CD8-positive, alpha-beta T cell (primary cell): ENCODE measurements at regions of chr20 and their contacts with region 1.

Region 1: DNA sequence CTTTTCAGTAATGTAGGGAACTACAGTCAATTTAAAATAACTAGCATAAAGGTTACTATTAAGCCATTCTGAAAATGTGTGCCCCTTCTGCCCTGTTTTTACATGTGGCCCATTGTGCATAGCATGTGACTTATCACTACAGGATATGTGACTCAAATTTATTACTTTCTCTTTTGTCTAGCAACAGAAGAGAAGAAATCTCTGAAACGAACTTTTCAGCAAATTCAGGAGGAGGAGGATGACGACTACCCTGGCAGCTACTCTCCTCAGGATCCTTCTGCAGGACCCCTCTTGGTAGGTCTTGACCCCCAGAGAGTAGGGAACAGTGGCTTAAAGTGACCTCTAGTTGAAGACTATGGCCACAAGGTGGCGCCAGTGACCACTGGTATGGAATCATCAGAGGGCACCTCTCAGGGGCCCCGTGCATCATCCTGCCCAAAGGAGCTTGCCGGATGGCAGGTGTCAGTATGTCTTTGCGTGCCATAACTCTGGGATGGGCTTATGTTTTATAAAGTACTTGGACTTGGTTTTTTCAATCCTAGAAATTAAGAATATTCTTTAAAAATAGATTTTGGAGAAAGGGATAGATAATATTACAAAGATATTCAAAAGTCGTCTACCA is 23.9 kb downstream of the RPRD1B start:
- DNase-seq: peak; percentile 53 to 84 (median 81)
- ATAC-seq: peak; percentile 92
- H3K4me3 ChIP-seq: no peak overlapping the region
- H3K4me3 Mint-ChIP-seq: no peak overlapping the region
- H3K27ac ChIP-seq: no peak overlapping the region
- H3K27ac Mint-ChIP-seq: peak overlapping the region; percentile 68
- H3K4me1 ChIP-seq: peaks cover 6% of the 10 kb centered on the region
- H3K4me1 Mint-ChIP-seq: peaks cover 27% of the 10 kb centered on the region
- H3K27me3 ChIP-seq: no peaks in the 10 kb centered on the region
- H3K27me3 Mint-ChIP-seq: no peaks in the 10 kb centered on the region
- CTCF ChIP-seq: peak; percentile 89

Region 2: GRCh38 chr20:37845241-37845711 is 212.2 kb before region 1 on chr20:
- CTCF ChIA-PET with region 1: no interaction called
- POLR2A ChIA-PET with region 1: no interaction called
- intact Hi-C with region 1: no loop called
- DNase-seq: no peak
- ATAC-seq: no peak
- H3K4me3 ChIP-seq: no peak overlapping the region
- H3K4me3 Mint-ChIP-seq: no peak overlapping the region
- H3K27ac ChIP-seq: no peak overlapping the region
- H3K27ac Mint-ChIP-seq: no peak overlapping the region
- H3K4me1 ChIP-seq: no peaks in the 10 kb centered on the region
- H3K4me1 Mint-ChIP-seq: no peaks in the 10 kb centered on the region
- H3K27me3 ChIP-seq: no peaks in the 10 kb centered on the region
- H3K27me3 Mint-ChIP-seq: no peaks in the 10 kb centered on the region
- CTCF ChIP-seq: no peak

Region 3: DNA sequence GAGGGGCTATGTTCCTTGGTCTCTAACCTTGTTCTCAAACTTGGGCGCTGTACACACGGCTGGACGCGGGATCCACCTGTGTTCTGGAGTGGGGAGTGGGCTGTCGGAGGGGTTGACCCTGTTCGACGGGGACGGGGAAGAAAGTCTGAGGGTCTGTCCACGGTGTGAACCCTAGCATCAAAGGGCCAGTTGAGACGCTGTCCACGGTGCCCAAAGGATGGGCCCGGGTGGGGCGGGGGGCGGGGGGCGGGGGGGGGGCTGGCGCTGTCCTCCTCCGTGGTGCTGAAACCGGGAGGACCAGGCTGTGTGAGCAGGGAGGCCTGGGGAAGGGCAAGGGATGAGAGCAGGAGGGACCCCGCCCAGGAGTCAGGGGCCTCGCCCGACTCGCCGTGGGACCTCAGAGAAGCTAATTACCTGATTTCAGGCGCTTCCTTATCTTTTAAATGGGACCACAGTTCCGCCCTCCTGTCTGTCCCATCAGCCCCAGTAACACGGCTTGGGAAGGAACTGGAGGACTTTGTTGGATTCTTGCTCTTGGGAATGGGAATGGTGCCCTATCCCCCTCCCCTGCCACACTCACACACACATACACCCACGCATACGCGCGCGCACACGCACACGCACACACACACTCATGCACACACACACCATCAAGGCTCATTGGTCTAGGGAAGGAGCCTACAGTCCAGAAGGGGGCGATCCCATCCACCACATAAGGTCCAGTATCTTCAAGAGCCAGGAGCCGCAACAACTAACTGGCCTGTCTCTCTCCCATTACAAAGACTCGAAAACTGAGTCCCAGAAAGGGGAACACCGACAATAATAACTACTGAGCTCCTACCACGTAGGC is 155.6 kb before region 1 on chr20:
- CTCF ChIA-PET with region 1: no interaction called
- POLR2A ChIA-PET with region 1: no interaction called
- intact Hi-C with region 1: no loop called
- DNase-seq: peak in 2 of 9 experiments; percentile 29 to 45
- ATAC-seq: peak; percentile 40
- H3K4me3 ChIP-seq: no peak overlapping the region
- H3K4me3 Mint-ChIP-seq: peak overlapping the region; percentile 42
- H3K27ac ChIP-seq: no peak overlapping the region
- H3K27ac Mint-ChIP-seq: peak overlapping the region; percentile 52
- H3K4me1 ChIP-seq: no peaks in the 10 kb centered on the region
- H3K4me1 Mint-ChIP-seq: peaks cover 13% of the 10 kb centered on the region
- H3K27me3 ChIP-seq: peaks cover 8 to 14% of the 10 kb centered on the region in 2 experiments
- H3K27me3 Mint-ChIP-seq: peaks cover 54% of the 10 kb centered on the region
- CTCF ChIP-seq: no peak

Region 4: DNA sequence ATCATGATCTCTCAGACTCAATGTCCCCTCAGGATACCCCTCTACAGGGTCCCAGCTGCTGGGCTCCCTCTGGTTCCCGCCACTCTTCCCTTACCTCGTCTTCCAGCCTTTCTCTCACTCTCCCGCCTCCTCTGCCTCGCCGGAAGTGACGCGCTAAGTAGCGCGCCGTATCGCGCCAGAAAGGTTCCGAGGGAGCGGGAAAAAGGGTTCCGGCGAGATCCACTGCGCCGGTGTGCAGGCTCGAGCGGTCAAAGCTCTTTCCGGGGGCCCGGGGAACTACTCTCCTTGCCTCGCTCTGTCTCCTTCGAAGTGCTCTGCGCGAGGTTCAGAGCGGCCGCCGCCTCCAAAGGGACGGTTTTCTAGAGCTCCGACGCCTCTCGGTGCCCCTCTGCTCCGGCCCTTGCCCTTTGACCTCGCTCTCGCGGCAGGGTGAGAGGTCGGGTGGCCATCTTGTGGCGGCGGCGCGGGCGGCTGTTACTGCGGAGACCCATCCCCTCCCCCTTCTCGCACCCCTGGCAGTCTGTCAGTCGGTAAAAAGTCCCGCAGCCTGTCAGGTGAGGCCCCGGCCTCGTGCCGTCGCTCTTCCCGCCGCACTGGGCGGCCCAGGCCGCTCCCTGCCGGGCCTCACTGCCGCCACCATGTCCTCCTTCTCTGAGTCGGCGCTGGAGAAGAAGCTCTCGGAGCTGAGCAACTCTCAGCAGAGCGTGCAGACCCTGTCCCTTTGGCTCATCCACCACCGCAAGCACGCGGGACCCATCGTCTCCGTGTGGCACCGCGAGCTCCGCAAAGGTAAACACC is 24.0 kb before region 1 on chr20 and contains the starts of genes RPRD1B and TTI1:
- CTCF ChIA-PET with region 1: interaction called, 8 read pairs
- POLR2A ChIA-PET with region 1: interaction called, 3 read pairs
- intact Hi-C with region 1: loop called in 1 of 2 experiments (anchors 1 kb)
- DNase-seq: peak; percentile 77 to 95 (median 88)
- ATAC-seq: peak; percentile 86
- H3K4me3 ChIP-seq: peak within 1 kb of the TSS; percentile 84 to 94
- H3K4me3 Mint-ChIP-seq: peak within 1 kb of the TSS; percentile 98
- H3K27ac ChIP-seq: peak within 1 kb of the TSS; percentile 92 to 98
- H3K27ac Mint-ChIP-seq: peak within 1 kb of the TSS; percentile 98
- H3K4me1 ChIP-seq: peaks cover 51% of the 10 kb centered on the region
- H3K4me1 Mint-ChIP-seq: peaks cover 73% of the 10 kb centered on the region
- H3K27me3 ChIP-seq: no peaks in the 10 kb centered on the region
- H3K27me3 Mint-ChIP-seq: no peaks in the 10 kb centered on the region
- CTCF ChIP-seq: no peak
- total RNA-seq, gene RPRD1B: 73.3 to 79.4 TPM
- total RNA-seq, gene TTI1: 12.6 to 15.7 TPM

Region 5: DNA sequence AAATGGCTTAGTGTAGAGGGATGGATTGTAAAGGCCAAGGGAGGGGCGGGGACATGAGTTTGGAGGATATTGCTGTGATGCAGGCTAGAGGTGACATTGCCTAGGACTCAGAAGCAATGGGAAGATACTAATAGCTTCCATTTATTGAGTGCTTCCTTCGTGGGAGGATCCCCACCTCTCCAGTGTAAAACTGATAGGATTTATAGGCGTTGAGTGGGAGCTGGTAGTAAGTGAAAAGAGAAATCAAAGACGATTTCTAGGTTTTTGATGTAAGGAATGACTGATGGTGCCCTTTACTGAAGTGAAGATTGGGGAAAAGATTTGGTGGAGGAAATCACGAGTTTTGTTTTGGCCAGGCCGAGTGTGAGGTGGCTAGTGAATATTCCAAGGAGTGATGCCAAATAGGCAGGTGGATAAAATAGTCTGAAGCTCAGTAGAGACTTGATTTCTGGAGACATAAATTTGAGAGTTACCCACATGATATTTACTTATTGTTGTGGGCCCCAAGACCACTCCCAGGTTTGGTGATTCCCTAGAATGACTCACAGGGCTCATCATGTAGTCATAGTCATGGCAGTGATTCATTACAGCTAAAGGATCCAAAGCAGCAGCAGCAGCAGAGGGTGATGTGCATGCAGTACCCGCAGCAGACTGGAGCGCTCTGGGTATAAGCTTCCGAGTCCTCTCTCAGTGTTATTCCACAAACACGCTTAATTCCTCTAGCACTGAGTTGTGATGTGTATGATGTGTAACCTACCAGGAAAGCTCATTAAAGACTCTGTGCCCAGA is 13.8 kb before region 1 on chr20:
- CTCF ChIA-PET with region 1: interaction called, 10 read pairs
- POLR2A ChIA-PET with region 1: interaction called, 3 read pairs
- intact Hi-C with region 1: loop called in 1 of 2 experiments (anchors 1 kb)
- DNase-seq: no peak
- ATAC-seq: no peak
- H3K4me3 ChIP-seq: no peak overlapping the region
- H3K4me3 Mint-ChIP-seq: no peak overlapping the region
- H3K27ac ChIP-seq: no peak overlapping the region
- H3K27ac Mint-ChIP-seq: no peak overlapping the region
- H3K4me1 ChIP-seq: no peaks in the 10 kb centered on the region
- H3K4me1 Mint-ChIP-seq: peaks cover 44% of the 10 kb centered on the region
- H3K27me3 ChIP-seq: no peaks in the 10 kb centered on the region
- H3K27me3 Mint-ChIP-seq: no peaks in the 10 kb centered on the region
- CTCF ChIP-seq: no peak

Region 6: GRCh38 chr20:38073307-38074071 is 16.0 kb after region 1 on chr20:
- CTCF ChIA-PET with region 1: interaction called, 19 read pairs
- POLR2A ChIA-PET with region 1: no interaction called
- intact Hi-C with region 1: no loop called
- DNase-seq: peak in 3 of 9 experiments; percentile 11 to 59 (median 48)
- ATAC-seq: peak; percentile 51
- H3K4me3 ChIP-seq: no peak overlapping the region
- H3K4me3 Mint-ChIP-seq: no peak overlapping the region
- H3K27ac ChIP-seq: no peak overlapping the region
- H3K27ac Mint-ChIP-seq: peak overlapping the region; percentile 42
- H3K4me1 ChIP-seq: no peaks in the 10 kb centered on the region
- H3K4me1 Mint-ChIP-seq: peaks cover 25% of the 10 kb centered on the region
- H3K27me3 ChIP-seq: no peaks in the 10 kb centered on the region
- H3K27me3 Mint-ChIP-seq: no peaks in the 10 kb centered on the region
- CTCF ChIP-seq: peak; percentile 63

Region 7: GRCh38 chr20:38165089-38165989 is 107.9 kb after region 1 on chr20 and contains the start of gene TGM2:
- CTCF ChIA-PET with region 1: interaction called, 7 read pairs
- POLR2A ChIA-PET with region 1: no interaction called
- intact Hi-C with region 1: loop called in 1 of 2 experiments (anchors 1 kb)
- DNase-seq: peak in 7 of 9 experiments; percentile 6 to 61 (median 33)
- ATAC-seq: peak; percentile 67
- H3K4me3 ChIP-seq: no peak within 1 kb of the TSS
- H3K4me3 Mint-ChIP-seq: no peak within 1 kb of the TSS
- H3K27ac ChIP-seq: no peak within 1 kb of the TSS
- H3K27ac Mint-ChIP-seq: no peak within 1 kb of the TSS
- H3K4me1 ChIP-seq: no peaks in the 10 kb centered on the region
- H3K4me1 Mint-ChIP-seq: peaks cover 3% of the 10 kb centered on the region
- H3K27me3 ChIP-seq: peaks cover 6% of the 10 kb centered on the region in 2 experiments
- H3K27me3 Mint-ChIP-seq: peaks cover 34% of the 10 kb centered on the region
- CTCF ChIP-seq: peak; percentile 18
- total RNA-seq, gene TGM2: not detected

Region 8: DNA sequence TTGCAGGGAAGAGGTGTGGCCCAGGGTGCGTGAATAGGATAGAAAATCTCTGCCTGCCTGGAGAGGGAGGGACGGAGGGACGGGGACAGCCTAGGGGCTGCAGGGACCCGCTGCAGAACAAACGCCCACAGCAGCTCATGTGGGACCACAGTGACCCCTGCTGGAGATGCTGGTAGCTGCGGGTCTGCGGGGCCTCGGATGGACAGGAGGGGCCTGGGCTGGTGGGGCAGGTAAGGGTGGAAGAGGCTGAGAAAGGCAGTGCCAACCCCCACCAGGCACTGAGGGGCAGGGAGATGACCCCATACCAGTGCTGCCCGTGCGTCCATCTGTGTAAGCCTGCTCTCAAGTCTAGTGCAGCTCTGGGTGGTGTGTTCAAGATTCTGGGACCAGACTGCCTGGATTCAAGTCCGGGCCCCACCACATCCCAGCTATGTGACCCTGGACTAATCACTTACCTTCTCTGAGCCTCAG is 163.7 kb after region 1 on chr20:
- CTCF ChIA-PET with region 1: interaction called, 45 read pairs
- POLR2A ChIA-PET with region 1: no interaction called
- intact Hi-C with region 1: loop called (anchors 1 kb)
- DNase-seq: peak; percentile 44 to 79 (median 66)
- ATAC-seq: peak; percentile 58
- H3K4me3 ChIP-seq: no peak overlapping the region
- H3K4me3 Mint-ChIP-seq: no peak overlapping the region
- H3K27ac ChIP-seq: no peak overlapping the region
- H3K27ac Mint-ChIP-seq: no peak overlapping the region
- H3K4me1 ChIP-seq: no peaks in the 10 kb centered on the region
- H3K4me1 Mint-ChIP-seq: peaks cover 2% of the 10 kb centered on the region
- H3K27me3 ChIP-seq: no peaks in the 10 kb centered on the region
- H3K27me3 Mint-ChIP-seq: peaks cover 3% of the 10 kb centered on the region
- CTCF ChIP-seq: peak; percentile 76